PC-9 (cell line): ENCODE measurements at regions of chr13 and their contacts with region 1.

Region 1: GRCh38 chr13:34469201-34470144 is 472.6 kb upstream of the NBEA start:
- DNase-seq: peak; percentile 18 to 97
- H3K4me3 ChIP-seq: no peak overlapping the region
- H3K27ac ChIP-seq: peak overlapping the region; percentile 78
- H3K4me1 ChIP-seq: peaks cover 36% of the 10 kb centered on the region
- H3K27me3 ChIP-seq: no peaks in the 10 kb centered on the region
- CTCF ChIP-seq: no peak

Region 2: DNA sequence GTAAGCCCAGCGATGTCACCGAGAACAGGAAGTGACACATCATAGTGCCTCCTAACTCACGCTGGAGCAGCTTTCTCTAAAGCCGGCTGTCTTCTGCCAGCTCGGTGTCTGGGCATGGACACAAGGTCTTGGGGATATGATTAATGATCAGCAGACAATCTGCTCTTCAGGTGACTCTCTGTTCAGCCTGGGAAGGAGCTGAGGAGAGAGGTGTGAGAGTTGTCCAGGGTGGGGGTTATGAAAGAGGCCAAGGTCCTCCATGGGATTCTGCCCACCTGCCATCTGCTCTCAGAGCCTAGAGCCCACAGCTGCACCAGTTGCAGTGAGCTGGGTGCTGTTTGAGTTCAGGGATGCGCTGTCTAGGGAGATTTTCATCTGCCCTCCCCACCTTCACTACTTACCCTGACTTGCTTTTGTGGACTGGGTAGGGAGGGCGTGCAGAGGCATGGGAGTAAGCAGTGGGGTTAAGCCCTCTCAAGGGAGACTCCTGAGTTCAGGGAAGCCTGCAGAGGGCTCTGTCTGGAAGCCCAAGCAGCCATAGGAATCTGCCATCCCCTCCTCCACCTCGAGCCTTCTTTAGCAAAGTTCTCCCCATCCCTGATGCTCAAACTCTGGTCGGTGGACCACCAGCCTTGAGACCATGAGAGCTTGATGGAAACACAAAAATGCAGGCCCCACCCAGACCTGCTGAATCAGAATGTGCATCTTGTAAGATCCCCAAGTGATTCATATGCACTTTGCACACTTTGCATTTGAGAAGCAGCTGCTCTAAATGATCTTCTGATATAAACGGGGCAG is 111.8 kb before region 1 on chr13:
- CTCF ChIA-PET with region 1: no interaction called
- POLR2A ChIA-PET with region 1: no interaction called
- intact Hi-C with region 1: loop called (anchors 5 kb)
- DNase-seq: peak; percentile 25 to 76
- H3K4me3 ChIP-seq: no peak overlapping the region
- H3K27ac ChIP-seq: peak overlapping the region; percentile 87
- H3K4me1 ChIP-seq: peaks cover 47% of the 10 kb centered on the region
- H3K27me3 ChIP-seq: no peaks in the 10 kb centered on the region
- CTCF ChIP-seq: no peak